ENCODE measurements at regions of chr5 and their contacts with region 1.

Region 1: GRCh38 chr5:119309326-119309725 is 46.5 kb upstream of the TNFAIP8 start:
- DNase-seq: no peak
- H3K4me3 Mint-ChIP-seq: peak overlapping the region; percentile 76
- H3K27ac Mint-ChIP-seq: peak overlapping the region; percentile 94
- H3K4me1 Mint-ChIP-seq: peaks cover 79% of the 10 kb centered on the region
- H3K27me3 Mint-ChIP-seq: no peaks in the 10 kb centered on the region

Region 2: DNA sequence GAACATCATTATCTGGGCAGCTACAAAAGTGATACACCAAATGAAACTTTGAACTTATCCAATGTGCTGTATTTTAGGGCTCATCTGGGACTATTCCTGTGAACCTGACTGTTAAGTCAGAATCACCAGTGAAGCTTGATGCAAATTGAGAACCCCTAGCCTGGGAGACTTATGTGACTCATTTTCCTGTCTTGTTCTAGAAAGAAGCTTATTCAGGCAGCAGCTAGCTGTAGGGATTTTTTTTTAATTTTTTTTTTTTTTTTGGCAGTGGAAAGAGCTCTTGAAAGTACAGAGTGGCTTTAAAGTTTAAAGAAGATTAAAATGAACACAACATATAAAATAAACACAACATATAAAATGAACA is 34.6 kb before region 1 on chr5:
- intact Hi-C with region 1: loop called (anchors 1 kb)
- DNase-seq: peak; percentile 78
- H3K4me3 Mint-ChIP-seq: peak overlapping the region; percentile 95
- H3K27ac Mint-ChIP-seq: peak overlapping the region; percentile 95
- H3K4me1 Mint-ChIP-seq: peaks cover 89% of the 10 kb centered on the region
- H3K27me3 Mint-ChIP-seq: no peaks in the 10 kb centered on the region

Region 3: DNA sequence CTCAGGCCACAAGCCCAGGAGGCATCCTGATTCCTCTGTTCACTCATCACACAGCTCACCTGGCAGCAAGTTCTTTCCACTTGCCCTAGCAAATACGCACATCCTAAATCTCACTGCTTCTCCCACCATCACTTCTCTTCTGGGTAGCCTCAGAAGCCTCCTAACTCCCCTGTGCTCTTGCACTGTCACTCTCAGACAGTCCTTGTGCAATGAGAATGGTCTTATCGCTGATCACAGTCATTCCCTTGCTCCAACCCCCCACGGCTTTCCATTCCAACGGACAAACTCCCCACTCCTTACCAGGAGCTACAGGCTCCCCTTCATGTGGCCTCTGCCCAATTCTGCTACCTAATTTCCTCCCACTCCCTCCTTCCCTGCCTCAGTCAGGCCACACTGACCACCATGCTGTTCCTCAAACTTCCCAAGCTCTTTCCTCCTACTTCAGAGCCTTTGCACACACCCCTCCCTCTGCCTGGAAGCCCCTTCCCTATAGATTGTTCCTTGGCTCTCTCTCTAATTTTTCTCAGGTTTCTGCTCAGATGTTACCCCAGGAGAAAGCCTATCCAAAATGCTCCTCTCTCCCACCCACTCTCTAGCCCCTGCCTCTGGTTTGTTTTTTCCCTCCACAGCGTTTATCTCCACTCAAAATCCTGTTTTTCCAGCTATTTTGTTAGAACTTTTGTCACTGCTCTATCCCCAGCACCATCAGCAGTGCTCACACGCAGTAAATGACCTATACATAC is 12.4 kb after region 1 on chr5:
- intact Hi-C with region 1: no loop called
- DNase-seq: no peak
- H3K4me3 Mint-ChIP-seq: peak overlapping the region; percentile 67
- H3K27ac Mint-ChIP-seq: peak overlapping the region; percentile 89
- H3K4me1 Mint-ChIP-seq: peaks cover 75% of the 10 kb centered on the region
- H3K27me3 Mint-ChIP-seq: no peaks in the 10 kb centered on the region

Region 4: GRCh38 chr5:119367502-119368237 is 58.3 kb after region 1 on chr5:
- intact Hi-C with region 1: loop called (anchors 1 kb)
- DNase-seq: peak; percentile 75
- H3K4me3 Mint-ChIP-seq: peak overlapping the region; percentile 78
- H3K27ac Mint-ChIP-seq: peak overlapping the region; percentile 96
- H3K4me1 Mint-ChIP-seq: peaks cover 69% of the 10 kb centered on the region
- H3K27me3 Mint-ChIP-seq: no peaks in the 10 kb centered on the region

Region 5: GRCh38 chr5:119411935-119412602 is 102.7 kb after region 1 on chr5:
- intact Hi-C with region 1: no loop called
- DNase-seq: peak; percentile 87
- H3K4me3 Mint-ChIP-seq: peak overlapping the region; percentile 85
- H3K27ac Mint-ChIP-seq: peak overlapping the region; percentile 70
- H3K4me1 Mint-ChIP-seq: peaks cover 32% of the 10 kb centered on the region
- H3K27me3 Mint-ChIP-seq: peaks cover 10% of the 10 kb centered on the region

Region 6: DNA sequence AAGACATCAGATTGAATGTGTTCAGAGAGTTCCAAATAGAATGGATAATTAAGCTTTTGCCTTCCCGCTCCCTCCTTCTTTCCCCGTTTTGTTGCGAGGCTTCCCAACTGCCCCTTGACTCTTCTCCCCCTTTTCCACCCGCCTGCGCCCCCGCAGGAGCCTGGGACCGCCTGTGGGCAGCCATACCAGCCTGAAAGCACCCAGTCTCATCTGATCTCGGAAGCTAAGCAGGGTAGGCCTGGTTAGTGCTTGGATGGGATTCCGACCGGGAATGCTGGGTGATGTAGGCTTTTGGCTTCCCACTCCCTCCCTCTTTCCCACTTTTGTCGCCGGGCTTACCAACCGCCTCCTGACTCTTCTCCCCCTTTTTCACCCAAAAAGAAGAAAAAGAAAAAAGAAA is 136.2 kb after region 1 on chr5:
- intact Hi-C with region 1: no loop called
- DNase-seq: no peak
- H3K4me3 Mint-ChIP-seq: no peak overlapping the region
- H3K27ac Mint-ChIP-seq: no peak overlapping the region
- H3K4me1 Mint-ChIP-seq: no peaks in the 10 kb centered on the region
- H3K27me3 Mint-ChIP-seq: peaks cover 43% of the 10 kb centered on the region